ENCODE measurements at regions of chr2 and their contacts with region 1.

Region 1: DNA sequence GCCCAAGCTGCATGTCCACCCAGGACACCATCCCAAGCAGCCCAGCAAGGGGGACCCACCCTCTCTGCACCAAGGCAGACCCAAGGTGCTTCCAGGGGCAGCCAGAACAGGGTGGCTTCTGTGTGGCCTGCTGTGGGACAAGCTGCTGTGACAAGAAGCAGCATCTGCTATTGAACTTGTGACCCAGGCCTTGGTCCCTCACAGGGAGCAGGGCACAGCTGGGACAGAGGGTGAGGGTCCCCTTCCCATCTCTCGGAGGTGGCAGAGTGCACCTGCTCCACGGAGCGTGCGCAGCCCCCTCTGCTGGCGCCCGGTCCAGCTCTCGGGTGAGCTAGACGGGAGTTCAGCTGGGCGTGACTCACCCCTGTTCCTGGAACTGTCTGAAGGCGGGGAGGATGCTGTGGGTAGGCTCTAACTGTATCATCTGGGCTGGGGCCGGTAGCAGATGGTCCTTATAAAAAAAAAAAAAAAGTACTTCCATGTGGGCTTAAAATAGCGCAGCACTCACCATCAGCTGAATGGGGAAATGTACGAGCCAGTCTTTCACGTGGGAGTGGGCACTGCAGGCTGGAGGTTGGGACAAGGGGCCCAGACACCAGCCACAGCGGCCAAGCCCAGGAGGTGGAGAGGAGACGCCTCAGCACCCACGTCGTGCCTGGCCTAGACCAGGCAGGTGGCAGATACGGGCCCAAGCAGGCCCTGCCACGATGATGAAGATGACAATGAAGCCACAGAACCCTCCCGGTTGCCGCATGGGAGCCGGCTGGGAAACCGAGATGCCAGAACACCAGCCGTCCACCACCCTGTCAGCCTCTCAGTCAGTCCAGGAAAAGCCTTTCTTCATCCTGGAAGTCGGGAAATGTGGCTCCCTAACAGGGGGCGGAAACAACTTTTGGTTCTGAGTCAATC is 136.8 kb upstream of the ID2 start:
- DNase-seq: peak; percentile 96 to 99 (median 99)
- H3K4me3 ChIP-seq: no peak overlapping the region
- H3K27ac ChIP-seq: peak overlapping the region in 1 of 2 experiments; percentile 76
- H3K4me1 ChIP-seq: peaks cover 23 to 87% (median 71%) of the 10 kb centered on the region in 4 experiments
- H3K27me3 ChIP-seq: no peaks in the 10 kb centered on the region

Region 2: GRCh38 chr2:8064603-8065002 is 480.4 kb before region 1 on chr2:
- CTCF ChIA-PET with region 1: no interaction called
- POLR2A ChIA-PET with region 1: no interaction called
- DNase-seq: no peak
- H3K4me3 ChIP-seq: no peak overlapping the region
- H3K27ac ChIP-seq: no peak overlapping the region
- H3K4me1 ChIP-seq: peaks cover 0 to 4% (median 2%) of the 10 kb centered on the region in 4 experiments
- H3K27me3 ChIP-seq: no peaks in the 10 kb centered on the region

Region 3: DNA sequence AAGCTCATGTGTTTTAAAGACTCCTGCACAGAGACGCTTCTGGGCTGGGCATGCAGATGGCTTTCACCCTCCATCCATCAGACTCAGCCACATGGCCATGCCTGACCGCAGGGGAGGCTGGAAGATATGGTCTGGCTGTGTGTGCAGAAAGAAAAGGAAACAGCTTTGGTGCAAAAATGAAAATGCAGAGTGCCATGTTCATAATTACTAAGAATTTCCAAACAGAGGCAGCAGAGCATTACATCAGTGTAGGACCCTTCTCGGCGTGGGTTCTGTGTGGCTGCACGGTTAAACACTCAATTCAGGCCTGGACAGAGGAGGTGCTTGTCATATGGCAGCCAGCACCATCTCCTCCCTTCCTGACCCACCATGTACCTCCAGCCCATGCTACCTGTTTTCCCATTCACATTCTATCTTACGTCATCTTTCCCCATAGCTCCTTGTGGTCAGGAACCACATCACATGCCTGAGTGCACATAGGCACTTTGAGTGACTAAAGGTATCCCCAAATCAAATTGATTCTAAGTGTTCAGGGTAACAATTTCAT is 63.5 kb before region 1 on chr2:
- CTCF ChIA-PET with region 1: interaction called, 12 read pairs
- POLR2A ChIA-PET with region 1: interaction called, 4 read pairs
- DNase-seq: peak in 2 of 3 donors; percentile 83 to 88
- H3K4me3 ChIP-seq: peak overlapping the region in 1 of 7 experiments; percentile 8
- H3K27ac ChIP-seq: no peak overlapping the region
- H3K4me1 ChIP-seq: peaks cover 18 to 75% (median 58%) of the 10 kb centered on the region in 4 experiments
- H3K27me3 ChIP-seq: no peaks in the 10 kb centered on the region

Region 4: GRCh38 chr2:8525582-8526402 is 19.2 kb before region 1 on chr2:
- CTCF ChIA-PET with region 1: interaction called, 16 read pairs
- POLR2A ChIA-PET with region 1: interaction called, 9 read pairs
- DNase-seq: peak; percentile 73 to 85 (median 83)
- H3K4me3 ChIP-seq: peak overlapping the region in 4 of 7 experiments; percentile 15 to 29 (median 24)
- H3K27ac ChIP-seq: peak overlapping the region in 1 of 2 experiments; percentile 45
- H3K4me1 ChIP-seq: peaks cover 3 to 68% (median 45%) of the 10 kb centered on the region in 4 experiments
- H3K27me3 ChIP-seq: no peaks in the 10 kb centered on the region

Region 5: DNA sequence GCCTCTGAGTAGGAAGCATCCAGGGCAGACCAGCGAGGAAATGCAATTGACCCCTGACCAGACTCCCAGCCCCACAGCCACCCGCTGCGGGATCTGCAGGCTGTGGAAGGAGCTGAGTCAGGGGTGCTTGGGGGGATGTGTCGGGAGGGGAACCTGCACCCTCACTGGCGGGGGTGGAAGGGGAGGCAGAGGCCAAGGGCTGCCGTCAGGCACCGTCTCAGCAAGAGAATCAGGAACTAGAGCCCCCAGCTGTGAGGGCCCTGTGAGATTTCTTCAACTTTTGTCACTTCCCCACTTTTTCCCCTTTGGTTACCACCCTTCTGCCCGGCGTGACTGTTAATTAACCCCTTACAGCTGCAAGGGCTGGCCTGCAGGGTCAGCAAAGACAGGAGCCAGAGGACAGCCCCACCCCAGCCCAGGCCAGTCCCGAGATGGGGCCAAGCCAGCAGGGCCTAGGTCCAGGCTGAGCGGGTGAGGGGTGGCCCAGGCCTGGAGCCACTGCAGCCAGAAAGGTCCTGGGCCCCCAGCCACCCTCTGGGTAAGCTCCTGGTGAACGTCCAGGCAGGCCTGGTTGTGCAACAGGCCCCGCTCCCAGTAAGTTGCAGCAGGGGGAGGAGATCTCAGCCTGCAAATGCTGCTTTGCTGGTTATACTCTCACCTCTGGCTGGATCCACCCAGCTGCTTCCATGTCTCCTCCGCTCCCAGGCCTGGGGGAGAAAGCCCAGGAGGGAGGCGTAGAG is 10.1 kb before region 1 on chr2:
- CTCF ChIA-PET with region 1: interaction called, 24 read pairs
- POLR2A ChIA-PET with region 1: interaction called, 11 read pairs
- DNase-seq: peak; percentile 67 to 95 (median 93)
- H3K4me3 ChIP-seq: peak overlapping the region in 3 of 7 experiments; percentile 4 to 13 (median 7)
- H3K27ac ChIP-seq: no peak overlapping the region
- H3K4me1 ChIP-seq: peaks cover 7 to 62% (median 58%) of the 10 kb centered on the region in 4 experiments
- H3K27me3 ChIP-seq: no peaks in the 10 kb centered on the region

Region 6: GRCh38 chr2:8574144-8575037 is 29.4 kb after region 1 on chr2:
- CTCF ChIA-PET with region 1: interaction called, 14 read pairs
- POLR2A ChIA-PET with region 1: interaction called, 3 read pairs
- DNase-seq: peak in 2 of 3 donors; percentile 68 to 76
- H3K4me3 ChIP-seq: peak overlapping the region in 3 of 7 experiments; percentile 22 to 60 (median 50)
- H3K27ac ChIP-seq: no peak overlapping the region
- H3K4me1 ChIP-seq: peaks cover 0 to 69% (median 46%) of the 10 kb centered on the region in 4 experiments
- H3K27me3 ChIP-seq: no peaks in the 10 kb centered on the region

Region 7: DNA sequence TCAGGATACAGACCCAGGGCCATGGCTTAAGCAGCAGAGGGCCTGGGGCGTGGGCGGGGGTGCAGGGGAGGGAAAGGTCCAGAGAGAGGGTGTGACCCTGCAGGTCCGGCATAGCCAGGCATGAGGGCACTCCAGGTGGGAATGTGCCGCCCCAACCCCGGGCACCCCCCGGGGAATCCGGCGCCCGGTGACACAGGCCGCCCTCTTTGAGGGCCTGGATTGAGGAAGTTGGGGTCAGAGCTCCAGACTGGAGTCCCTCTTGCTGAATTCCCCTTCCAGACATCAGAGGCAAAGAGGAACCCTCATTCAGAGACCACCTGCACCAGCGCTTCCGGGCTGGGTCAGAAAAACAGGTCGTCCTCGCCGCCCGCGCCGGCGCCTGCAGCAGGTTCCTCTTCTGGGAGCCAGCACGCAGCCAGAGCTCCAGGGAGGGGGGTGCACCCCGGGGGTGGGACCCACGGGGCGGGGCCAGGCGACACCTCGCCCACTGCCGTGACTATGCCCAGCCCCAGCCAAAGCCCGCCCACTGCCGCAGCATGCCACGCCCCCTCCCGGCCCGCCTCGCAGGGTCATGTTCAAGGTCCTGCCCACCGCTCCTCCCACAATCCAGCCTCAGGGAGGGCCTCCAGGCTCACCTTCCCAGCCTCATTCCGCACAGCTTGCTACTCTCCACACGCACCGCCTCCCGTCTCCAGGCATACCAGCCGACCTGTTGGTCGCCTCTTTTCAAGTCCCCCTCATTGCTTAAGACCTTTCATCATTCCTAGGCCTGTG is 38.5 kb after region 1 on chr2:
- CTCF ChIA-PET with region 1: interaction called, 56 read pairs
- POLR2A ChIA-PET with region 1: interaction called, 27 read pairs
- DNase-seq: peak; percentile 98 to 100 (median 100)
- H3K4me3 ChIP-seq: peak overlapping the region in 4 of 7 experiments; percentile 26 to 51 (median 41)
- H3K27ac ChIP-seq: peak overlapping the region; percentile 16 to 63
- H3K4me1 ChIP-seq: peaks cover 4 to 86% (median 73%) of the 10 kb centered on the region in 4 experiments
- H3K27me3 ChIP-seq: no peaks in the 10 kb centered on the region

Region 8: GRCh38 chr2:8681786-8682692 is 137.0 kb after region 1 on chr2 and contains the start of gene ID2:
- CTCF ChIA-PET with region 1: interaction called, 9 read pairs
- POLR2A ChIA-PET with region 1: interaction called, 56 read pairs
- DNase-seq: peak; percentile 98 to 99 (median 99)
- H3K4me3 ChIP-seq: peak within 1 kb of the TSS; percentile 65 to 94 (median 83)
- H3K27ac ChIP-seq: peak within 1 kb of the TSS; percentile 5 to 65
- H3K4me1 ChIP-seq: peaks cover 5 to 65% (median 57%) of the 10 kb centered on the region in 4 experiments
- H3K27me3 ChIP-seq: peaks cover 0 to 11% (median 6%) of the 10 kb centered on the region in 5 experiments